Transverse colon (tissue), 4 donors: ENCODE measurements at regions of chr16 and their contacts with region 1.

Region 1: DNA sequence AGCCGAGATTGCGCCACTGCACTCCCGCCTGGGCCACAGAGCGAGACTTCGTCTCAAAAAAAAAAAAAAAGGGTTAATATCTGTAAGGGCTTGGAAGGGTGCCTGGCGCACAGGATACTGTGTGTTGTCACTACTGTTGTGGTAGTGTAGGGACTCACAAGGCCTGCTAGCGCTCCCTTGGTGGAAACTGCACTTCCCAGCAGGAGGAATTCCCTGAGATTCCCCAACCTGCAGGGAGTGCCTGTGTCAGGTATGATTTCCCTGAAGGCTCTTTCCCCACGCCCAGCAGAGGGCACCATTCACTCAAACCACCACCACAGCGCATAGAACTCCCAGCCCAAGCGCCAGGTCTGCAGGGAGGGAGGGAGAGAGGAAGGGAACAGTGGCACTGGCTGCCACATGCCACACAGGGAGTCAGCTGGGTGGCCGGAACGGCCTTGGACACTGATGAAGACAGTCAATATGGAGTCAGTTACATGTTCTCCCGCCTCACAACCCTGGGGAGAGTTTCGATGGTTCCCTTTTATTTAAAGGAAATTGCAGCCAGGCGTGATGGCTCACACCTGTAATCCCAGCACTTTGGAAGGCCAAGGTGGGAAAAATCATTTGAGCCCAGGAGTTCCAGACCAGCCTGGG is 32.7 kb upstream of the CDH1 start:
- DNase-seq: peak; percentile 92
- H3K4me3 ChIP-seq: no peak overlapping the region
- H3K27ac ChIP-seq: no peak overlapping the region
- H3K4me1 ChIP-seq: peaks cover 0 to 14% (median 6%) of the 10 kb centered on the region in 4 donors
- H3K27me3 ChIP-seq: no peaks in the 10 kb centered on the region
- CTCF ChIP-seq: peak; percentile 69 to 96 (median 79)
- EP300 ChIP-seq: no peak
- POLR2A ChIP-seq: no peak

Region 2: DNA sequence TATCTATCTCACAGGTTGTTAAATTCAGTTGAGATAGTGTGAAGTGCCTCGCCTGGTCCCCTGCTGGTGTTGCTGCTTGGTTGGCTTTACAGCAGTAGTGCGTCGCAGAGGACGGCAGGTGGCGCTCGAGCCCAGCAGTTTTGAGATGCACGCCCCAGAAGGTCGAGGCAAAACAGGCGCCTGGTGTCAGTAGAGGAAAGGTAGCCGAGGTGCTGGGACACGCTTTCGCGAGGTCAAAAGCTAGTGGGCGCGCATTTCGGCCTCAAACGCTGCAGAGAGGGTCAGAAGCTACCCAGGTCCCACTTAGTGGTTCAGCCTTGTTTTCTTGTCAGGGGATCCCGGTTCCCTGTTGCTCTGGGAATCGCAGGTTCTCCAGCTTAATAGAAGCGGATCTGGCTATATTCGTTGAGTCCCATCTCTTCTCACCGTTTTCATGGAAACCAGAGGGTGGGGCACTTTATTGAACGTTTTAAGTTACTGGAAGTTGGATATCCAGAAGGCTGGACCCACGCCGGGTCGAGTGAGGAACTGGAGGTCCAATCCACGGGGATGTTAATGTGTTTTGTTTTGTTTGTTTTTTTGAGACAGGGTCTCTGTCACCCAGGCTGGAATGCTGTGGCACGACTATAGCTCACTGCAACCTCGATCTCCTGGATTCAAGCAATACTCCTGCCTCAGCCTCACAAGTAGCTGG is 175.5 kb before region 1 on chr16:
- in situ Hi-C with region 1: no loop called
- intact Hi-C with region 1: loop called (anchors 5 kb)
- DNase-seq: peak; percentile 91
- H3K4me3 ChIP-seq: peak overlapping the region in 1 of 4 donors; percentile 25
- H3K27ac ChIP-seq: peak overlapping the region in 2 of 4 donors; percentile 1 to 28
- H3K4me1 ChIP-seq: peaks cover 4 to 20% (median 18%) of the 10 kb centered on the region in 4 donors
- H3K27me3 ChIP-seq: no peaks in the 10 kb centered on the region
- CTCF ChIP-seq: peak; percentile 90 to 95 (median 93)
- EP300 ChIP-seq: no peak
- POLR2A ChIP-seq: no peak

Region 3: DNA sequence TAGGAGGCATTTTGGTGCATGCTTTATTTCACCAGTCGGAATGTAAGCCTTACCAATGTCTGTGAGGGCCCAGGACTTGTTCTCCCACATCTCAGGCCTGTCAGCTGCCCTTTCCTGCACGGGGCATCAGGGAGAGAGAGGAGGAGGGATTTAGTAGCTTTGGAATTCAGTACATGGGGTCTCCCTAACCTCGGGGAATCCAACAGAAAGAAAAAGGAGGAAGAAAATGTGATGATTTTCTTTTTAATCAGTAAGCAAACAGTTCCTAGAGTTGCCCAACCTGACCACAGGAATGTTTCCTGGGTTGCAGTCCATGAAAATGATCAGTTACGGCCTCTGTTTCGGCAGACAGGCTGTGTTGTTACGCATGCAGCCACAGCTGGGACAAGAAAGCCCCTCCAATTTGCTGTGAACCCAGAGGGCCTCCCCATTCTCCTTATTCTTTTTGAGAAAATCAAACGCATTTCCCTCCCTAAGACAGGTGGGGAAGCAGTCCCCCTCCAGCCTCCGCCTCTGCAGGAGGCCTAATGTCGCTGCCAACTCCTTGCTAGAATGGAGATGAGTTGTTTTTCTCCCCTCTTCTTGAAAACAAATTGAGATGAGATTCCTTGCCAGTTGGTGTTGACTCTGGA is 85.9 kb after region 1 on chr16:
- in situ Hi-C with region 1: loop called in 2 of 4 experiments (anchors 10 kb)
- intact Hi-C with region 1: no loop called
- DNase-seq: peak; percentile 18
- H3K4me3 ChIP-seq: no peak overlapping the region
- H3K27ac ChIP-seq: peak overlapping the region; percentile 18 to 81 (median 61)
- H3K4me1 ChIP-seq: peaks cover 9 to 45% (median 13%) of the 10 kb centered on the region in 4 donors
- H3K27me3 ChIP-seq: no peaks in the 10 kb centered on the region
- CTCF ChIP-seq: no peak
- EP300 ChIP-seq: no peak
- POLR2A ChIP-seq: no peak

Region 4: GRCh38 chr16:68800257-68800875 is 96.0 kb after region 1 on chr16:
- in situ Hi-C with region 1: loop called in 3 of 4 experiments (anchors 10 kb)
- intact Hi-C with region 1: no loop called
- DNase-seq: peak; percentile 65
- H3K4me3 ChIP-seq: no peak overlapping the region
- H3K27ac ChIP-seq: no peak overlapping the region
- H3K4me1 ChIP-seq: peaks cover 0 to 11% (median 0%) of the 10 kb centered on the region in 4 donors
- H3K27me3 ChIP-seq: no peaks in the 10 kb centered on the region
- CTCF ChIP-seq: peak; percentile 64 to 79 (median 65)
- EP300 ChIP-seq: no peak
- POLR2A ChIP-seq: no peak

Region 5: DNA sequence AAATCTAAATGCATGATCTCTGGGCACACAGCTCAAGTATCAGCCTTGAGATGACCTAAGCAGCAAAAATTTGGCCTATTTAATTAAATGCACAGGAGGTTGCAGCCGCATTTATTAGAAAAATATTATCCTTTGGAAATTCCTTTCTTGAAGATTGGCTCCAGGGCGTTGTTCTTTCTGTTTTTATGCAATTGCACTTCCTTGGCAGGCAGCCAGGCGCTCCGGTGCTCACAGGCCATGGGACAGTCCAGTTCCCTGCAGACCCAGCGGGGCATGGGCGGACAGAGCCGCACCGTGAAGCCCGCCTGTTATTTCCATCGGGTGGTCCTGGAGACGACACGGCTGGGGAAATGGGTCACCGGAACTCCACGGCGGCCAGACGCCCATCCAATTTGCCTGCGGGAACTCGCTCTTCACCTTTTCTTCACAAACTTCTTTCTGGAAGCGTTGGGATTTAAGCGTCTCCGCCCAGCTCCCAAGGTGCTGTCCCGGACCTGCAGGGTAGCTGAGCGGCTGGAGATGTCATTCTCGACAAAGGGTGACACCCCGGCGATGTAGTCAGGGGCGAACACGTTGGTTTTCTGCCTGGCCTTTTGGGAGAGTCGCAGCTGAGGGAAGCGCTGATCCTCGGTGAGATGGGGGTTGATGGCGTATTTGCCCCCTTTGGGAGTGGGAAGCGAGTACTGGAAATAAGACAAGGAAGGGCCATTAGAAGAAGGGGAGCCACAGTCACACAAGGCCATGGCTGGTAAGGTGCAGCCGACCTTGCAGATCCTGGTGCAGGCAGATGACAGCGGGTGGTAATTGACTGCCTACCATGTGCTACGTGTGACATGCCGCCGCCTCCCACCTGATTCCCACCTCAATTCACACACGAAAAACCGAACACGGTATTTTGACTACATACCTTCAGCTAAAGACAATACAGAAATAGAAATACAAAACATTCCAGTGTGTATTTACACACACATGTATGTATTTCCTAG is 1037.9 kb after region 1 on chr16:
- in situ Hi-C with region 1: no loop called
- intact Hi-C with region 1: loop called (anchors 5 kb)
- DNase-seq: peak; percentile 92
- H3K4me3 ChIP-seq: peak overlapping the region in 1 of 4 donors; percentile 27
- H3K27ac ChIP-seq: peak overlapping the region; percentile 20 to 77 (median 70)
- H3K4me1 ChIP-seq: peaks cover 3 to 14% (median 13%) of the 10 kb centered on the region in 4 donors
- H3K27me3 ChIP-seq: no peaks in the 10 kb centered on the region
- CTCF ChIP-seq: peak in 2 of 5 experiments; percentile 12 to 32
- EP300 ChIP-seq: no peak
- POLR2A ChIP-seq: no peak